Gastrocnemius medialis (tissue), 4 donors: ENCODE measurements at regions of chr10 and their contacts with region 1.

Region 1: DNA sequence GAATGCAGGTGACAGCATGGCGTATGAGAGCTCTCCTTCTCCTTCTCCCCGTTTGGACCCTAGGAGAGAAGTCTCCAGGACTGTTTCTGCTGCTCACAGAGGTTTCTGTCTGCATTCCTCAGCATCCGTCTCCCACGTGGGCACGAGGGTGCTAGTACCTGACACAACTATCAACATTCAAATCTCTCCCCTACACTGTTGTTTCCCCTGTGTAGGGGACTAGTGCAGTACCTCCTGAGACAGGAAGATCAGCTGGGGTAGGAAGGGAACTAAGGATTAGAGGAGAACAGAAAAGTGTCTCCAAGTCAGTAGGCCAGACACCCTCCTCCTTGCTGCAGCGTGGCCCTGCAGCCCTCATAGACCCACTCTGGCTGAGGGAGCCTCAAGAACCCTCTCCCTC is 29.0 kb downstream of the STOX1 start:
- DNase-seq: no peak
- ATAC-seq: no peak
- H3K4me3 ChIP-seq: no peak overlapping the region
- H3K27ac ChIP-seq: no peak overlapping the region
- H3K4me1 ChIP-seq: no peaks in the 10 kb centered on the region
- H3K27me3 ChIP-seq: no peaks in the 10 kb centered on the region
- CTCF ChIP-seq: no peak
- POLR2A ChIP-seq: no peak

Region 2: DNA sequence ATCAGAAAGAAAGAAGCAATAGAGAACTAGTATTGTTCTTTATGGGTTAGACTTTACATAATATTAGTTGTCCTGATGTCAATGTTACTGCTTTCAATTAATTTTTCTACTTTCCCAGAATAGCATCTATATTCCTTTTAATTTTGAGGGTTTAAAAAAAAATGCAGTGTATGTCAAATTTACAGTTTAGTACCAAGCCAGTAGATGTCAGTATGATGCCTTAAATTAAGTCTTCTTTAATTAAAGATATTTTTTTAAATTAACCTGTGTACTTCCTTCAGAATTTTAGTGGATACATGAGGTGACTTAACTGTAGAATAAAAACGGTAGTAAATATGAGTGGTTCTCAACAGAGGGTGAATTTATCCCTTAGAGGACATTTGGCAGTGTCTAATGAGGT is 64.2 kb before region 1 on chr10:
- in situ Hi-C with region 1: no loop called
- intact Hi-C with region 1: no loop called
- DNase-seq: no peak
- ATAC-seq: no peak
- H3K4me3 ChIP-seq: no peak overlapping the region
- H3K27ac ChIP-seq: no peak overlapping the region
- H3K4me1 ChIP-seq: no peaks in the 10 kb centered on the region
- H3K27me3 ChIP-seq: no peaks in the 10 kb centered on the region
- CTCF ChIP-seq: peak in 1 of 5 experiments; percentile 22
- POLR2A ChIP-seq: no peak

Region 3: GRCh38 chr10:68813559-68813958 is 42.8 kb before region 1 on chr10:
- in situ Hi-C with region 1: no loop called
- intact Hi-C with region 1: loop called (anchors 2 kb)
- DNase-seq: no peak
- ATAC-seq: no peak
- H3K4me3 ChIP-seq: no peak overlapping the region
- H3K27ac ChIP-seq: no peak overlapping the region
- H3K4me1 ChIP-seq: no peaks in the 10 kb centered on the region
- H3K27me3 ChIP-seq: no peaks in the 10 kb centered on the region
- CTCF ChIP-seq: no peak
- POLR2A ChIP-seq: no peak